H1 (cell line): ENCODE measurements at regions of chr3 and their contacts with region 1.

Region 1: GRCh38 chr3:185049710-185050109 is 103.2 kb downstream of the C3orf70 start:
- DNase-seq: no peak
- H3K4me3 ChIP-seq: no peak overlapping the region
- H3K27ac ChIP-seq: no peak overlapping the region
- H3K4me1 ChIP-seq: peaks cover 0 to 4% (median 1%) of the 10 kb centered on the region in 4 experiments; a peak in 2 of 7 replicates
- H3K27me3 ChIP-seq: no peaks in the 10 kb centered on the region
- CTCF ChIP-seq: peak in 2 of 3 experiments; percentile 54 to 57; a peak in 3 of 4 replicates
- EP300 ChIP-seq: no peak
- POLR2A ChIP-seq: no peak
- RAD21 ChIP-seq: peak; percentile 44 to 65

Region 2: DNA sequence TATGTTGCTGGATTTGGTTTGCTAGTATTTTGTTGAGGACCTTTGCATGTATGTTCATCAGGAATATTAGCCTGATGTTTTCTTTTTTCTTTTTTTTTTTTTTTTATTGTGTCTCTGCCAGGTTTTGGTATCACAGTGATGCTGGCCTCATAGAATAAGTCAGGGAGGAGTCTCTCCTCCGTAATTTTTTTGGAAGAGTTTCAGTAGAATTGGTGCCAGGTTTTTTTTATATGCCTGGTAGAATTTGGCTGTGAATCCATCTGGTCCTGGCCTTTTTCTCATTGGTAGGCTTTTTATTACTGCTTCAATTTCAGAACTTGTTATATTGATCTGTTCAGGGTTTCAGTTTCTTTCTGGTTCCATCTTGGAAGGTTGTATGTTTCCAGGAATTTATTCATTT is 71.9 kb before region 1 on chr3:
- CTCF ChIA-PET with region 1: no interaction called
- POLR2A ChIA-PET with region 1: no interaction called
- DNase-seq: no peak
- H3K4me3 ChIP-seq: no peak overlapping the region
- H3K27ac ChIP-seq: no peak overlapping the region
- H3K4me1 ChIP-seq: no peaks in the 10 kb centered on the region
- H3K27me3 ChIP-seq: no peaks in the 10 kb centered on the region
- CTCF ChIP-seq: no peak
- EP300 ChIP-seq: no peak
- POLR2A ChIP-seq: no peak
- RAD21 ChIP-seq: no peak

Region 3: GRCh38 chr3:185084901-185085300 is 35.2 kb after region 1 on chr3:
- CTCF ChIA-PET with region 1: interaction called, 10 read pairs
- POLR2A ChIA-PET with region 1: no interaction called
- DNase-seq: no peak
- H3K4me3 ChIP-seq: no peak overlapping the region
- H3K27ac ChIP-seq: no peak overlapping the region
- H3K4me1 ChIP-seq: peaks cover 0 to 5% (median 0%) of the 10 kb centered on the region in 4 experiments; a peak in 1 of 7 replicates
- H3K27me3 ChIP-seq: no peaks in the 10 kb centered on the region
- CTCF ChIP-seq: peak; percentile 2 to 38 (median 31); a peak in 3 of 4 replicates
- EP300 ChIP-seq: no peak
- POLR2A ChIP-seq: no peak
- RAD21 ChIP-seq: peak; percentile 45 to 61